Activated CD4-positive, alpha-beta T cell treated with anti-CD3 and anti-CD28 coated beads for 36 hours (primary cell): ENCODE measurements at regions of chr7 and their contacts with region 1.

Region 1: GRCh38 chr7:66905689-66906088 is 15.3 kb upstream of the TMEM248 start:
- DNase-seq: no peak
- ATAC-seq: no peak
- H3K4me3 Mint-ChIP-seq: no peak overlapping the region
- H3K27ac Mint-ChIP-seq: no peak overlapping the region
- H3K4me1 Mint-ChIP-seq: no peaks in the 10 kb centered on the region
- H3K27me3 Mint-ChIP-seq: no peaks in the 10 kb centered on the region

Region 2: GRCh38 chr7:66859794-66860645 is 45.7 kb before region 1 on chr7:
- CTCF ChIA-PET with region 1: no interaction called
- POLR2A ChIA-PET with region 1: no interaction called
- intact Hi-C with region 1: no loop called
- DNase-seq: peak; percentile 78
- ATAC-seq: peak; percentile 98
- H3K4me3 Mint-ChIP-seq: peak overlapping the region; percentile 35
- H3K27ac Mint-ChIP-seq: peak overlapping the region; percentile 92
- H3K4me1 Mint-ChIP-seq: peaks cover 22% of the 10 kb centered on the region
- H3K27me3 Mint-ChIP-seq: no peaks in the 10 kb centered on the region

Region 3: GRCh38 chr7:66894463-66895080 is 11.1 kb before region 1 on chr7:
- CTCF ChIA-PET with region 1: interaction called, 15 read pairs
- POLR2A ChIA-PET with region 1: no interaction called
- intact Hi-C with region 1: no loop called
- DNase-seq: peak; percentile 27
- ATAC-seq: peak; percentile 85
- H3K4me3 Mint-ChIP-seq: no peak overlapping the region
- H3K27ac Mint-ChIP-seq: no peak overlapping the region
- H3K4me1 Mint-ChIP-seq: no peaks in the 10 kb centered on the region
- H3K27me3 Mint-ChIP-seq: no peaks in the 10 kb centered on the region